KBM-7 (cell line): ENCODE measurements at regions of chr3 and their contacts with region 1.

Region 1: GRCh38 chr3:46208167-46208704 is at the start of gene CCR1:
- DNase-seq: peak; percentile 84

Region 2: DNA sequence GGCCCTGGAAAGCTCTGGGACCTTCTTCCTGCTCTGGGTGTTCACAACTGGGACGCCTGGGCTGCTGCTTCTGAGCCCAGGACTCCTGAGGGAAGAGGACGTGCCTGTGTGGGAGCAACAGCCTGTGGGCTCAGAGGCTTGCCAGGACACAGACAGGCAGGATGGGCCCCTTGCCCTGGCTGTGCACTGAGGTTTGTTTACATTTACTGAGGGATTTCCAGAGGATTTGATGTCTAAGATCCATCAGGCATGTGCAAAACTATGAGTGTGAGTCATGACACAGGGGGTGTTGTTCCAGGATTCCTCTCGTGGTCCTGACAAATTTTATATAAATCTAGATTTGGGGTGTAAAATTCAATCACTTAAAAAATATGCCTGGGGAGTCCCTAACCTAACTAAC is 311.3 kb before region 1 on chr3:
- in situ Hi-C with region 1: no loop called
- DNase-seq: no peak

Region 3: DNA sequence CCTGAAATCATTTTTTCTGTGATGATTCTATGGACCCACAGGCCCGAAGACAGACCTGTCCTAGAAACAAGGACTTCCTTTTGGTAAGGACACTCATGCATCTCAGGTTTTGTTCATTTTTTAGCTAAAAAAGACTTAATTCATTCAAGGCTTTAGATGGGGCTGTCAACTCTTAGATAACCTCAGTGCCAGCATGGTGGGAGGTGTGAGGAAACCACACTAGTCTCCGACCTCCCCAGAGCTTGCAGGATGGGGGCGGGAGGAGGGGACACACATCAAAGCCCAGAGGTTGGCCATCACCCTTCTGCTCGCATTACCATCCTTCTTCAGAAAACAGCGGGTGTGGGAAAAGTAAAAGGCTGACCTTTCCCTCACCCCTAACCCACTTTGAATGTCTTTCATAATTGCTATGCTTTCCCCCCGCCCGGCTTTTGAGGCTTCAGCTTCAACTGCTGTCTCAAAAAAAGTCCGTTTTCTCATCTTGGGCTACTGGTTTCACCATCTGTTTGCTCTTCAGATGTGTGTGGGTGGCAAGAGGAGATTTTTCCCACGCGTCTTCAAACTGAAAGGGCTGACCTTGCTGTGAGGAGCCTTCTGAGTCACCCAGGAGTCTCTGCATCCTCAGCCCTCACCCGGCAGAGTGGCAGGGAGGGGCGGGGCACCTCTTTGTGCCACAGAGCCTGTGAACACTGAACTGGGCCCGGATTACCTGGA is 292.6 kb before region 1 on chr3:
- in situ Hi-C with region 1: no loop called
- DNase-seq: no peak

Region 4: GRCh38 chr3:46089237-46090011 is 118.8 kb before region 1 on chr3:
- in situ Hi-C with region 1: loop called (anchors 10 kb)
- DNase-seq: no peak

Region 5: DNA sequence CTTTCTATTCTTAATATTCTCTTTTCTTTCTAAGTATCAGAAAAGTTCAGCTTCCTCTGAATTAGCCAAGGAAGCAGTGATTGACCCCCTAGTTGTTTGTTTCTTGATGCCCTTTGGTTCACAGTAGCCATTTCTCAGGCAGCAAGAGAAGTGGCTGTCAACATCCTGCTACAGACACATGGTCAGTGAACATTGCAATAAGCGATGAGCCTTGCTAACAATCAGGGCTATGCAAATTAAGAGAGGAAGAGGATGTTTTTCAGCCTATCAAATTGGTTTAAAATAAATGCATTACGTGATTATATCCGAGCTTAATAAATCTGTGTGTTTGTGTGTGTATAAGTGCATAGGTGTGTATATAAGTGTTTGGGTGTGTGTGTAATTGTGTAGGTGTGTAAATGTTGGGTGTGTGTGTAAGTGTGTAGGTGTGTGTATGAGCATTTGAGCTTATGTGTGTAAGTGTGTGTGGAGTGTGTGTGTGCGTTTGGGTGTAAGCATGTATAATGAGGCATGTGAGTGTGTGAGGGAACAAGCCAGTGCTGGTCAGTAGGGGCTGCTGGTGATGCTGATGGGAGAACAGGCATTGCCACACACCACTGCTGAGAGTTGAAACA is 102.8 kb before region 1 on chr3:
- in situ Hi-C with region 1: no loop called
- DNase-seq: no peak